ENCODE measurements at regions of chr1 and their contacts with region 1.

Region 1: DNA sequence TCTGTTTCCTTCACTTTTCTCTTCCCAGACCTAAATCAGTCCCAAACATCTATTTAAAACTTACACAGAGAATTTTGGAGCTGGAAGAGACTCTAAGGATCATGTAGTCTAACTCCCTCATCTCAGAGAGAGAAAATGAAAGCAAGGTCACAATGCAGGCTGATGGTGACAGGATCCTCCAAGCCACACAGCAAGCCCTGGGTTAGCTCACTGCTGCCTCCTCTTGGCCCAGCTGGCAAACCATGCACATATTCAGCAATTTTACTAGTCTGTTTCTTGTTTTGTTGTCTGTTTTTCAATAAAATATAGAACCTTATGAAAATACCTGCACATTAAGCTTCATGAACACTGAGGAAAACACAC is 27.7 kb upstream of the LY9 start:
- ATAC-seq: peak in 3 of 8 experiments; percentile 74 to 88 (median 86)
- H3K4me3 ChIP-seq: no peak overlapping the region
- H3K27ac ChIP-seq: no peak overlapping the region
- H3K4me1 ChIP-seq: no peaks in the 10 kb centered on the region

Region 2: DNA sequence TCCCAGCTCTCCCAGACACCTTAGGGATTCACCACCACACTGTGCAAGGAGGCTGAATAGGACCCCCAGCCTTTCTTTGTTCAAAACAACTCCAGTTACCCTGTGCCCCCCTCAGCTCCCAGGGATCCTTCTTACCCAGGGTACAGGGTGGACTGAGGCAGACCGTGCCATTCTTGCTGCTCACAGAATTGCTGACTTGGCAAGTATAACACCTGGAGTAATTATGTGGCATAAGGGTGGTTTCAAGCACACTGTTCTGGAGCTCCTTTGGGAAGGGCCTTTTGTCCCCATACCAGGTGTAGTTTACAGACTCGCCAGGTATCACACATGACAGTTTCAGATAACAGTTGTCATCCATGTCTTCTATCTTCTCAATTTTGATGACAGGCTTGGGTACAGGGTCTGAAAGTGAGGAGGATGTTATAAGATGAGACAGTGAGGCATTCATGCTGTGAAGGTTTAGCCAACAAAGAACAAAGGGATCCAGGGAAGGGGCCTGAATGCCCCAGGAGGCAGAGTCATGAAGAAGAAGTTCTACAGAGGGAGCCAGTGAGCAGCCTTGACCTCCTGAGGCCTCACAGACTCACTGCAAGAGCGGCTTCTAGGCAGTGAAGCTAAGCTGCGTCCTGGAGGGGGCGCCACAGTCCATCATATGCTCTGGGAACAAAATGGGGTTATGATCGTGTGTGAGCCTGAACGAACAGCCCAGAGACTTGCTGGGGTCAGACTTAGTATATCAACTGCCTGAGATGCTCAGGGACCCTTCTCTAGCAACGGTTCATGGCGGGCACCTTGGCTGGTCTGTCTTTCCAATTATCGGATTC is 87.0 kb before region 1 on chr1:
- in situ Hi-C with region 1: loop called in 1 of 9 experiments (anchors 10 kb)
- ATAC-seq: peak in 7 of 8 experiments; percentile 27 to 99 (median 46)
- H3K4me3 ChIP-seq: no peak overlapping the region
- H3K27ac ChIP-seq: no peak overlapping the region
- H3K4me1 ChIP-seq: no peaks in the 10 kb centered on the region